ENCODE measurements at regions of chr1 and their contacts with region 1.

Region 1: GRCh38 chr1:40315239-40315794 is 1.8 kb downstream of the COL9A2 start:
- DNase-seq: peak; percentile 82 to 96 (median 92)

Region 2: GRCh38 chr1:40161125-40161887 is 154.0 kb before region 1 on chr1 and contains the start of gene RLF:
- intact Hi-C with region 1: loop called (anchors 5 kb)
- DNase-seq: peak; percentile 85 to 98 (median 96)

Region 3: DNA sequence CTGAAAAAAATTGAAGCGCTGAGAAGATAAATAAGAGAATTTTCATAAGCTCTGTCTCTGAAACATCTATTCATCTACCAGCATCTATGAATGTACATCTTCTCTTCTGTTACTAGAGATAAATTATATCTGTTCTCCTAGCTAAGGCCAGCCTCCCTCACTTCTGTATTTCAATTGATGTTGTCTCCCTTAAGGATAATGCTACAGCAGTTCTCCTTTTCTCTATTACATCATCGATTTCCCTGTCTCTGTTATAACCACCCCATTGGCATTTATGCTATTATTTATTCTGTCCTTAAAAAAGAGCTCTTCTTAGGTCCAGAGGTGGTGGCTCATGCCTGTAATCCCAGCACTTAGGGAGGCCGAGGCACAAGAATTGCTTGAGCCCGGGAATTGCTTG is 110.5 kb before region 1 on chr1:
- intact Hi-C with region 1: no loop called
- DNase-seq: no peak

Region 4: GRCh38 chr1:40257688-40258444 is 57.5 kb before region 1 on chr1 and contains the start of gene ZMPSTE24:
- intact Hi-C with region 1: loop called (anchors 2 kb)
- DNase-seq: peak; percentile 92 to 99 (median 96)

Region 5: GRCh38 chr1:40389871-40390560 is 74.7 kb after region 1 on chr1:
- intact Hi-C with region 1: loop called (anchors 10 kb)
- DNase-seq: peak in 5 of 42 donors; percentile 37 to 67 (median 38)